ENCODE measurements at regions of chr6 and their contacts with region 1.

Region 1: GRCh38 chr6:27126815-27127537 is 120.5 kb upstream of the PRSS16 start:
- DNase-seq: peak; percentile 93
- ATAC-seq: peak; percentile 76
- H3K4me3 ChIP-seq: peak overlapping the region; percentile 5 to 56 (median 40)
- H3K4me3 Mint-ChIP-seq: peak overlapping the region; percentile 87
- H3K27ac ChIP-seq: peak overlapping the region in 1 of 2 donors; percentile 56
- H3K27ac Mint-ChIP-seq: peak overlapping the region; percentile 85
- H3K4me1 ChIP-seq: peaks cover 13 to 18% of the 10 kb centered on the region in 2 donors
- H3K4me1 Mint-ChIP-seq: peaks cover 20% of the 10 kb centered on the region
- H3K27me3 ChIP-seq: no peaks in the 10 kb centered on the region
- H3K27me3 Mint-ChIP-seq: no peaks in the 10 kb centered on the region
- CTCF ChIP-seq: peak; percentile 92

Region 2: DNA sequence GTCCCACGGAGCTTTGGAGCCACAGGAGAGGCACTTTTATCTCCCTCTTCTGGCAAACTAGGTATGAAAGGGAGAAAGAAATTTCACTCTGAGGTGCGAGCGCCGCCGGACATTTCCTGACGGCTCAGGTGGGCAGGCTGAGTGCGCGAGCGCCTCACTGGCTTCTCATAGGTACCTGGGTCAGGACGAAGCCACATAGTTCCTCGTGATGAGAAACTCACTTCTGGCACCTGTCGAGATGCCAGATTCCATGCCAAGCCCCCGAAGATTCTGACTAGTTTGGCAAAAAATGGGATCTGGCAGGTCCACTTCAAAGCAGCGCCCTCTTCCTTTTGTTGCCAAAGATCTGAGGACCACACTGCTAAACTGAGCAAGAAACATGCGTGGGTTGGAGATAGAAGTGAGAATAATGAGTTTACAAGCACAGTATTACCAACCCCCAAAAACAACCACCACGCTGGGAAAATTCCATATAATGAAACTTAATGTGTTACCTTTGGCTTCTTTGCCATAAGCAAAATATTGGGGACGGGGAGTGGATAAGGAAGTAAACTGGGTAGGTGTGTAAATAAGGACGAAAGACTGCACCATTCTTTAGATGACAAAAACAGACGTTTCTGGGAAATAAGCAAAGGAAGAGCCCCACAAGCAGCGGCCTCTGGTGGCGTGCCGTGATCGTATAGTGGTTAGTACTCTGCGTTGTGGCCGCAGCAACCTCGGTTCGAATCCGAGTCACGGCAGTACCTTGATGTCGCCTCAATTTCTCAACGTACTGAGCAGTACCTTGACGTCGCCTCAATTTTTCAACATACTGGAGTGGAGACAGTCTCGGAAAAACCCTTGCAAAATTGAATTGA is 30.7 kb after region 1 on chr6:
- CTCF ChIA-PET with region 1: interaction called, 56 read pairs
- POLR2A ChIA-PET with region 1: no interaction called
- intact Hi-C with region 1: loop called (anchors 1 kb)
- DNase-seq: peak; percentile 91
- ATAC-seq: peak; percentile 77
- H3K4me3 ChIP-seq: peak overlapping the region; percentile 59 to 91 (median 72)
- H3K4me3 Mint-ChIP-seq: peak overlapping the region; percentile 94
- H3K27ac ChIP-seq: peak overlapping the region; percentile 18 to 45
- H3K27ac Mint-ChIP-seq: peak overlapping the region; percentile 85
- H3K4me1 ChIP-seq: peaks cover 17 to 20% of the 10 kb centered on the region in 2 donors
- H3K4me1 Mint-ChIP-seq: peaks cover 25% of the 10 kb centered on the region
- H3K27me3 ChIP-seq: no peaks in the 10 kb centered on the region
- H3K27me3 Mint-ChIP-seq: no peaks in the 10 kb centered on the region
- CTCF ChIP-seq: peak; percentile 64

Region 3: GRCh38 chr6:27422651-27423332 is 295.8 kb after region 1 on chr6:
- CTCF ChIA-PET with region 1: no interaction called
- POLR2A ChIA-PET with region 1: no interaction called
- intact Hi-C with region 1: no loop called
- DNase-seq: no peak
- ATAC-seq: no peak
- H3K4me3 ChIP-seq: no peak overlapping the region
- H3K4me3 Mint-ChIP-seq: no peak overlapping the region
- H3K27ac ChIP-seq: no peak overlapping the region
- H3K27ac Mint-ChIP-seq: no peak overlapping the region
- H3K4me1 ChIP-seq: no peaks in the 10 kb centered on the region
- H3K4me1 Mint-ChIP-seq: no peaks in the 10 kb centered on the region
- H3K27me3 ChIP-seq: no peaks in the 10 kb centered on the region
- H3K27me3 Mint-ChIP-seq: peaks cover 15% of the 10 kb centered on the region
- CTCF ChIP-seq: no peak

Measured in B cell (primary cell).